CD4-positive, alpha-beta T cell (primary cell): ENCODE measurements at regions of chr11 and their contacts with region 1.

Region 1: GRCh38 chr11:8149726-8150125 is 19.1 kb downstream of the RIC3 start:
- DNase-seq: no peak
- ATAC-seq: no peak
- H3K4me3 ChIP-seq: no peak overlapping the region
- H3K4me3 Mint-ChIP-seq: no peak overlapping the region
- H3K27ac ChIP-seq: no peak overlapping the region
- H3K27ac Mint-ChIP-seq: no peak overlapping the region
- H3K4me1 ChIP-seq: no peaks in the 10 kb centered on the region
- H3K4me1 Mint-ChIP-seq: no peaks in the 10 kb centered on the region
- H3K27me3 ChIP-seq: no peaks in the 10 kb centered on the region
- H3K27me3 Mint-ChIP-seq: no peaks in the 10 kb centered on the region
- CTCF ChIP-seq: no peak

Region 2: GRCh38 chr11:8060801-8061554 is 88.7 kb before region 1 on chr11:
- CTCF ChIA-PET with region 1: no interaction called
- POLR2A ChIA-PET with region 1: no interaction called
- intact Hi-C with region 1: no loop called
- DNase-seq: no peak
- ATAC-seq: no peak
- H3K4me3 ChIP-seq: no peak overlapping the region
- H3K4me3 Mint-ChIP-seq: no peak overlapping the region
- H3K27ac ChIP-seq: no peak overlapping the region
- H3K27ac Mint-ChIP-seq: no peak overlapping the region
- H3K4me1 ChIP-seq: no peaks in the 10 kb centered on the region
- H3K4me1 Mint-ChIP-seq: no peaks in the 10 kb centered on the region
- H3K27me3 ChIP-seq: no peaks in the 10 kb centered on the region
- H3K27me3 Mint-ChIP-seq: no peaks in the 10 kb centered on the region
- CTCF ChIP-seq: no peak

Region 3: DNA sequence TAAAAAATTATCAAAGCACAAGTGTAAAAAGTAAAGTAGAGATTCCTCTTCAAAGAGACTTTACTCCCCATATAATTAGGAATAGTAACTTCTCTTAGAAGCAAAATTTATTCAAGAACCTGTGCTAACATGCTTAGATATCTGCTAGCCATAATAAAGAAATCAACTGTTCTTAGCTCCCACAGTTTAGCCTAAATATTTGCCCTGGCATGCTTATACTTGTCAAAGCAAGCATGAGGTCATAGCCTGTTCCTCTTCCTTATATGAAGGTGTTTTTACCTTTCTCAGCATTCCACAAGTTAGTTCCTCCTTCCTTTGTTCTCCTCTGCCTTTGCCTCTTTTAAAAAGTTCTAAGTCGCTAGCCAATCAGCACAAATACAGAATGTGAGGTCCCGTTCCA is 11.2 kb before region 1 on chr11:
- CTCF ChIA-PET with region 1: no interaction called
- POLR2A ChIA-PET with region 1: no interaction called
- intact Hi-C with region 1: loop called in 1 of 2 experiments (anchors 1 kb)
- DNase-seq: no peak
- ATAC-seq: no peak
- H3K4me3 ChIP-seq: no peak overlapping the region
- H3K4me3 Mint-ChIP-seq: no peak overlapping the region
- H3K27ac ChIP-seq: no peak overlapping the region
- H3K27ac Mint-ChIP-seq: no peak overlapping the region
- H3K4me1 ChIP-seq: no peaks in the 10 kb centered on the region
- H3K4me1 Mint-ChIP-seq: no peaks in the 10 kb centered on the region
- H3K27me3 ChIP-seq: no peaks in the 10 kb centered on the region
- H3K27me3 Mint-ChIP-seq: no peaks in the 10 kb centered on the region
- CTCF ChIP-seq: no peak

Region 4: GRCh38 chr11:8403310-8403709 is 253.6 kb after region 1 on chr11:
- CTCF ChIA-PET with region 1: no interaction called
- POLR2A ChIA-PET with region 1: no interaction called
- intact Hi-C with region 1: no loop called
- DNase-seq: no peak
- ATAC-seq: no peak
- H3K4me3 ChIP-seq: no peak overlapping the region
- H3K4me3 Mint-ChIP-seq: no peak overlapping the region
- H3K27ac ChIP-seq: no peak overlapping the region
- H3K27ac Mint-ChIP-seq: no peak overlapping the region
- H3K4me1 ChIP-seq: no peaks in the 10 kb centered on the region
- H3K4me1 Mint-ChIP-seq: no peaks in the 10 kb centered on the region
- H3K27me3 ChIP-seq: no peaks in the 10 kb centered on the region
- H3K27me3 Mint-ChIP-seq: no peaks in the 10 kb centered on the region
- CTCF ChIP-seq: no peak